GM12878 (cell line): ENCODE measurements at regions of chr6 and their contacts with region 1.

Region 1: DNA sequence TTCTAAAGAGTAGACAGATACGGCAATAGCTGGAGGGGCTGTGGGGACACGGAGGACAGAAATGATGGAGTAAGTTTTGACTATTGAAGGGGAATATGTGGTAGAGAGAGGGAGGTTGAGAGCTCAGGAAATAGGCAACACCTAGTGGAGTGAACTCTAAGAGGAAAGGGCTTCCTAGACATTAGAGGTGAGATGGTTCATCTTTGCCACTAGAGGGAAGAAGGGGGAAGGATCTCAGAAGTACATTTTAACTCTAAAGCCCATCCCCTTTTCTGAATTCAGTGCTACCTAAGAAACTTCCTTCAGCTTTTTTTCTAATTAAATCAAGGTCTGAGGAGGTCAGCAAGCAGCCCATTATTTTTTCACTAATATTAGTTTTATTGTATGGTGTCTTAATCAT is 689.4 kb upstream of the MAP3K7 start:
- DNase-seq: no peak
- ATAC-seq: peak; percentile 86
- H3K4me3 ChIP-seq: no peak overlapping the region
- H3K27ac ChIP-seq: no peak overlapping the region
- H3K4me1 ChIP-seq: no peaks in the 10 kb centered on the region
- H3K27me3 ChIP-seq: no peaks in the 10 kb centered on the region
- CTCF ChIP-seq: peak in 2 of 3 experiments; percentile 33 to 47; a peak in 4 of 6 replicates
- EP300 ChIP-seq: no peak
- POLR2A ChIP-seq: no peak
- RAD21 ChIP-seq: peak; percentile 36; the same call in 1 of the 2 replicates

Region 2: GRCh38 chr6:91288741-91289140 is 12.4 kb after region 1 on chr6:
- CTCF ChIA-PET with region 1: interaction called, 10 read pairs
- POLR2A ChIA-PET with region 1: no interaction called
- RAD21 ChIA-PET with region 1: no interaction called
- SMC1A ChIA-PET with region 1: no interaction called
- in situ Hi-C with region 1: no loop called
- intact Hi-C with region 1: no loop called
- DNase-seq: no peak
- ATAC-seq: no peak
- H3K4me3 ChIP-seq: no peak overlapping the region
- H3K27ac ChIP-seq: no peak overlapping the region
- H3K4me1 ChIP-seq: no peaks in the 10 kb centered on the region
- H3K27me3 ChIP-seq: no peaks in the 10 kb centered on the region
- CTCF ChIP-seq: no peak
- EP300 ChIP-seq: no peak
- POLR2A ChIP-seq: no peak
- RAD21 ChIP-seq: no peak

Region 3: DNA sequence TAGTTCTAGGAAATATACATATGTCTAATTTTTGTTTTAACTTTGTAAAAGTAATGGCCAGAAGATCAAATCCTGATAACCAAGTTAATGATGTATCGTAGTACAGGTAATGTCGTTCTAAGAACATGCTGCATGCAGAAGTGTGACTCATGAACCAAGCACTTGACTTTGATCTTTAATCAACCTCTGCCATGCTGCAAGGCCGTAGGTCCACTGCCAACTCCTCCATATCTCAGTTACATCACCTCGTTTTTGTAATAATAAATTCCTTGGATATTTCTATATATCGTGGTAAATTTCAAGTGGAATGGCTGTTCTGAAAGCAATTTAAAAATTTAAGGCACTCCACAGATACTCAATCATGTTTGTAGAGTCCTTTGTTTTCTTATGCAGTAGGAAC is 1371.3 kb after region 1 on chr6:
- CTCF ChIA-PET with region 1: no interaction called
- POLR2A ChIA-PET with region 1: no interaction called
- RAD21 ChIA-PET with region 1: no interaction called
- SMC1A ChIA-PET with region 1: no interaction called
- in situ Hi-C with region 1: no loop called
- intact Hi-C with region 1: loop called (anchors 5 kb)
- DNase-seq: no peak
- ATAC-seq: no peak
- H3K4me3 ChIP-seq: no peak overlapping the region
- H3K27ac ChIP-seq: no peak overlapping the region
- H3K4me1 ChIP-seq: no peaks in the 10 kb centered on the region
- H3K27me3 ChIP-seq: no peaks in the 10 kb centered on the region
- CTCF ChIP-seq: no peak
- EP300 ChIP-seq: no peak
- POLR2A ChIP-seq: no peak
- RAD21 ChIP-seq: no peak